Testis (tissue), 5 donors: ENCODE measurements at regions of chr6 and their contacts with region 1.

Region 1: DNA sequence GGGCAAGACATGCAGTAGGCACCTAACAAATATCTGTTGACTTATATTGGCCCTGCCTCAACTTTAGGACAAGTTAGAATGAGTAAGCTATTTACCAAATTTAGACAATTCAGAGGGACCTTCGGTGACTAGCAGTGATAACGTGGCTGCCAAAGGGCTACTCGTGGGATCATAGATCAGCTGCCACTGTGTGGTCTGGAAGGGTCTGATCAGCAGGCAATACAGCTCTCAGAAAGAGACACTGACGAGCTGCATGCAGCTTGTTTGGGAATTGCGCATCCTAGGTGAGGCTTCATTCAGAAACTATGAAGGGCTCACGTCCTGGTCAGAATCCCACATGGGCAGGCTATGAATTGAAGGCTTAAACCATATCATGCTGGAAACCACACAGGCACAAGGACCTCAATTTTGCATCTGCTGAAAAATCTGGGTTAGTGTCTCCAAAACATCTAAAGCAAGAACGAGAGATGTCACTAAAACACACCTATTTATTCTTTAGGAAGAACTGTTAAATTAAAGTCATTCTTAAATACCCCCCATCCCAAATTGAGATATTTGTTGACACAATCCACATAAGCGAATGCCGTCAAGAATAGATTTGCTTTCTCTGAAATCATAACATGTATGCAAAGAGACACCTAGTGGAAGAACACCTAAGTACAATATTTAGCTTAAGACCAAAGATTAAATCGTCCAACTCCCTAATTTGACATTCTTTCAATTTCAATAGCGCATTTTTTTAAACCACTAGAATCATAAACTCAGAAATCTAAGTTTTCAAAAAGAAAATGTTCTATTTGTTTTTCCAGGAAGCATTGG is 79.6 kb downstream of the IPCEF1 start:
- DNase-seq: no peak
- H3K4me3 ChIP-seq: no peak overlapping the region
- H3K27ac ChIP-seq: no peak overlapping the region
- H3K4me1 ChIP-seq: no peaks in the 10 kb centered on the region
- H3K27me3 ChIP-seq: no peaks in the 10 kb centered on the region
- CTCF ChIP-seq: peak; percentile 33 to 62 (median 57)
- POLR2A ChIP-seq: no peak

Region 2: GRCh38 chr6:154156135-154156896 is 120.7 kb before region 1 on chr6:
- intact Hi-C with region 1: loop called (anchors 10 kb)
- DNase-seq: peak; percentile 61
- H3K4me3 ChIP-seq: no peak overlapping the region
- H3K27ac ChIP-seq: no peak overlapping the region
- H3K4me1 ChIP-seq: peaks cover 14% of the 10 kb centered on the region
- H3K27me3 ChIP-seq: no peaks in the 10 kb centered on the region
- CTCF ChIP-seq: peak; percentile 44 to 71 (median 65)
- POLR2A ChIP-seq: no peak